ENCODE measurements at regions of chrX and their contacts with region 1.

Region 1: DNA sequence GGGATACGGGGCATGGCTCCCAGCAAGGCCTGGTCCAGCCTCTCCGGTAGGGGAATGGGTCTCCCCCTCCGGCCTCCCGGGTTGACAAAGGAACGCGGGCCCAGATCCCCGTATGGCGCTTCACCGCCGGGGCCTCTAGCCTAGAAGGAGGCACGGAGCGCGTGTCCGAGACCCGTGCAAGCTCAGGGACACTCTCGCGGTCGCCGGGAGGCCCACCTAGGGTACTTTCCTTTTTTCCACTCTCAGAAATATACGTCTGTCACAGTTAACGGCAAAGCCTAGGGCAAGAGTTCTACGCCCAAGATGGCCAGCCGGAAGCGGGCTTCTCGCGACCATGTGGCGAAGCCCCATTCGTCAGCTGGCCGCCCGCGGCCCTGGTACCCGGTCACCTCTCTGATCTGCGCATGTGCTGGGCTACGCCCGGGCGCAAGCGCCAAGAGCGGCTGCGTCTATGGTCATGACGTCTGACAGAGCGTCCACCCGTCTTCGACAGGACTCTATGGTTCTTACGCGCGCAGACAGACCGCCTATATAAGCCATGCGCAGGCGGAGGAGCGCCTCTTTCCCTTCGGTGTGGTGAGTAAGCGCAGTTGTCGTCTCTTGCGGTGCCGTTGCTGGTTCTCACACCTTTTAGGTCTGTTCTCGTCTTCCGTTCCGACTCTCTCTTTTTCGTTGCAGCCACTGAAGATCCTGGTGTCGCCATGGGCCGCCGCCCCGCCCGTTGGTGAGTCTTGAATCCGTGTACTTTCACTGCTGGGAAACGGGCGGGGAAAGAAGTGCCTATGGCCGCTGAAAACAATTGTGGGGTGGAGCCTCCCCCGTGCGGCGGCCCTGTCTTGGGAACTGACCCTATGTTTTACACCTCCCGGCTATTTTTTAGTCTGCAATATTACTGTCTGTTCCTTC is at the start of gene RPL10:
- DNase-seq: peak; percentile 83 to 95
- ATAC-seq: peak; percentile 78 to 91 (median 79)
- H3K4me3 ChIP-seq: peak within 1 kb of the TSS; percentile 95
- H3K4me3 Mint-ChIP-seq: peak within 1 kb of the TSS; percentile 96
- H3K27ac ChIP-seq: peak within 1 kb of the TSS; percentile 99
- H3K27ac Mint-ChIP-seq: peak within 1 kb of the TSS; percentile 98
- H3K4me1 ChIP-seq: peaks cover 25% of the 10 kb centered on the region
- H3K4me1 Mint-ChIP-seq: peaks cover 14 to 19% of the 10 kb centered on the region in 2 donors
- H3K27me3 ChIP-seq: no peaks in the 10 kb centered on the region
- H3K27me3 Mint-ChIP-seq: peaks cover 0 to 8% of the 10 kb centered on the region in 2 donors
- CTCF ChIP-seq: no peak
- total RNA-seq, gene RPL10: 2,249 to 2,456 (median 2,324) TPM

Region 2: GRCh38 chrX:154348114-154348531 is 49.9 kb before region 1 on chrX:
- intact Hi-C with region 1: loop called (anchors 10 kb)
- DNase-seq: peak; percentile 14 to 29
- ATAC-seq: no peak
- H3K4me3 ChIP-seq: no peak overlapping the region
- H3K4me3 Mint-ChIP-seq: peak overlapping the region; percentile 46
- H3K27ac ChIP-seq: peak overlapping the region; percentile 74
- H3K27ac Mint-ChIP-seq: peak overlapping the region; percentile 98 to 100
- H3K4me1 ChIP-seq: peaks cover 62% of the 10 kb centered on the region
- H3K4me1 Mint-ChIP-seq: peaks cover 25 to 36% of the 10 kb centered on the region in 2 donors
- H3K27me3 ChIP-seq: no peaks in the 10 kb centered on the region
- H3K27me3 Mint-ChIP-seq: no peaks in the 10 kb centered on the region
- CTCF ChIP-seq: no peak

Region 3: DNA sequence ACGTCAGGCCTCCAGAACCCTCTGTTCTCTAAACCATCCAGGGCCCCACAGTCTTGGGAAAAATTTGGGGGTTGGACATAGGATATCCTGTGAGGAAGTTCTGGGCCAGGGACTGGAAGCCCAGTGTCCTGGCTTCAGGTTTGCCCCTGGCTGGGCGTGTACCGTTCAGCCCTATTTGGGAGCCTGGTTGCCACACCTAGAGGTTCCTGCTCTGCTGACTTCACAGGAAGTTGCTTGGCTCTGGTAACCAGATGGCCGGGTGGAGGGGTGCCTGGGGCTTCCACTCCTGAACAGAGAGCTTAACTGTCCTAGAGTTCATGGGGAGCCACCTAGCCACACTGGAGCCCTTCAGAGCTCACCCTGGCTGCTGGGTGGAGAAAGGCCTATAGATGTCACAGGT is 14.4 kb after region 1 on chrX:
- intact Hi-C with region 1: no loop called
- DNase-seq: peak in 1 of 2 donors; percentile 60
- ATAC-seq: no peak
- H3K4me3 ChIP-seq: peak overlapping the region; percentile 47
- H3K4me3 Mint-ChIP-seq: peak overlapping the region; percentile 74
- H3K27ac ChIP-seq: peak overlapping the region; percentile 56
- H3K27ac Mint-ChIP-seq: peak overlapping the region; percentile 68 to 79
- H3K4me1 ChIP-seq: peaks cover 32% of the 10 kb centered on the region
- H3K4me1 Mint-ChIP-seq: peaks cover 5 to 26% of the 10 kb centered on the region in 2 donors
- H3K27me3 ChIP-seq: no peaks in the 10 kb centered on the region
- H3K27me3 Mint-ChIP-seq: peaks cover 0 to 6% of the 10 kb centered on the region in 2 donors
- CTCF ChIP-seq: no peak

Region 4: GRCh38 chrX:154443992-154444754 is 46.1 kb after region 1 on chrX and contains the start of gene FAM50A:
- intact Hi-C with region 1: loop called (anchors 5 kb)
- DNase-seq: peak; percentile 74 to 84
- ATAC-seq: peak; percentile 92 to 93 (median 93)
- H3K4me3 ChIP-seq: peak within 1 kb of the TSS; percentile 56
- H3K4me3 Mint-ChIP-seq: peak within 1 kb of the TSS; percentile 67
- H3K27ac ChIP-seq: peak within 1 kb of the TSS; percentile 77
- H3K27ac Mint-ChIP-seq: peak within 1 kb of the TSS; percentile 76 to 93
- H3K4me1 ChIP-seq: peaks cover 28% of the 10 kb centered on the region
- H3K4me1 Mint-ChIP-seq: peaks cover 0 to 8% of the 10 kb centered on the region in 2 donors
- H3K27me3 ChIP-seq: no peaks in the 10 kb centered on the region
- H3K27me3 Mint-ChIP-seq: no peaks in the 10 kb centered on the region
- CTCF ChIP-seq: no peak
- total RNA-seq, gene FAM50A: 48.9 to 63.2 (median 54.1) TPM

Region 5: GRCh38 chrX:154534862-154535670 is 137.0 kb after region 1 on chrX:
- intact Hi-C with region 1: loop called (anchors 5 kb)
- DNase-seq: peak; percentile 85 to 92
- ATAC-seq: peak; percentile 93 to 100 (median 95)
- H3K4me3 ChIP-seq: no peak overlapping the region
- H3K4me3 Mint-ChIP-seq: peak overlapping the region; percentile 9
- H3K27ac ChIP-seq: peak overlapping the region; percentile 50
- H3K27ac Mint-ChIP-seq: peak overlapping the region; percentile 72 to 85
- H3K4me1 ChIP-seq: peaks cover 34% of the 10 kb centered on the region
- H3K4me1 Mint-ChIP-seq: peaks cover 15 to 17% of the 10 kb centered on the region in 2 donors
- H3K27me3 ChIP-seq: no peaks in the 10 kb centered on the region
- H3K27me3 Mint-ChIP-seq: no peaks in the 10 kb centered on the region
- CTCF ChIP-seq: peak; percentile 94